ENCODE measurements at regions of chr16 and their contacts with region 1.

Region 1: DNA sequence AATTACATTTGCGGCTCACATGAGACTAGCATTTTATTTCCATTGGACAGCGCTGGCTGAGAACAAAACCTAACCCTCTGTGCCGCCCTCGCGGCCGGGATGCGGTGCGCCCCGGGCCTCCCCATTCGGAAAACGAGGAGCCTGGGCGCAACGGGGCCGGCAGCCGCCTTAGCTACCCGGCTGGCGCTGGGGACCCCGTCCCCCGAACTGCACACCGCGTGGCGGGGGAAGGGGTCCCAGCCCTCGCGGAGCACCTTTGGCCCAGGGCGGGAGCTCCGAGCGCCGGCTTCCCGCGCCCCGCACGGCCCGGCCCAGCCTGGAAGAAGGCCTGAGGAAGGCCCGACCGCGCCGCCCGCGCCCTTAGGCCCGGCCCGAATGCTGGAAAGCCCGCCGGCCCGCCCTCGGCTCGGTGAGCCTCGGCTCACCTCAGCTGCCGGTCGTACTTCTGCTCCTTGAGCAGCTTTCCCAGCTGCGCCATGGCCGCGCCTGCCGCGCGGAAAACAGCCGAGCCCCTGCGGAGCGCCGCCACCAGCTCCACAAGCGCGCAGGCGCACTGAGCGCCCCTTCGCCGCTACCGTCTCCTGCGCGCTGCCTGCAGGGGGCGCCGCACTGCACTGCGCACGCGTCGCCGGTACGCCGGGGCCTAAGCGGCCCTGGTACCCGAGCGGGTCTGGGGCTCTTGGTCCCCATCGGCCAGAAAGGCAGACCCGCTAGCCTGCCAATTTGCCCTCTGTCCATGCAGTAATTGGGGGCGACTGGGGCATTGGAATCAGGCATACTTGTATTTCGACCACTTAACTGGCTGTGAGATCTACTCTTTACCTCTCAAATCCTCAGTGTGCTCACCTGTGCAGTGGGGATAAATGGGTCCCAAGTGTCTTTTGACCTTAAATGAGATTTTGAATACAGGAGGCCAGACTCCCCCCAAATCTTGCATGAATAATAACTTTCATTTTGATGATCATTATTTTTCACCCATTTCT is at the start of gene NAE1:
- DNase-seq: peak; percentile 98

Region 2: GRCh38 chr16:66786551-66786950 is 44.2 kb before region 1 on chr16:
- CTCF ChIA-PET with region 1: no interaction called
- POLR2A ChIA-PET with region 1: no interaction called
- DNase-seq: no peak

Region 3: GRCh38 chr16:66842765-66843164 is 12.1 kb after region 1 on chr16:
- CTCF ChIA-PET with region 1: interaction called, 13 read pairs
- POLR2A ChIA-PET with region 1: interaction called, 10 read pairs
- DNase-seq: peak; percentile 9

Region 4: GRCh38 chr16:66872943-66873684 is 42.4 kb after region 1 on chr16:
- CTCF ChIA-PET with region 1: interaction called, 9 read pairs
- POLR2A ChIA-PET with region 1: interaction called, 13 read pairs
- DNase-seq: peak; percentile 86